Common myeloid progenitor, CD34-positive (primary cell): ENCODE measurements at regions of chr13 and their contacts with region 1.

Region 1: DNA sequence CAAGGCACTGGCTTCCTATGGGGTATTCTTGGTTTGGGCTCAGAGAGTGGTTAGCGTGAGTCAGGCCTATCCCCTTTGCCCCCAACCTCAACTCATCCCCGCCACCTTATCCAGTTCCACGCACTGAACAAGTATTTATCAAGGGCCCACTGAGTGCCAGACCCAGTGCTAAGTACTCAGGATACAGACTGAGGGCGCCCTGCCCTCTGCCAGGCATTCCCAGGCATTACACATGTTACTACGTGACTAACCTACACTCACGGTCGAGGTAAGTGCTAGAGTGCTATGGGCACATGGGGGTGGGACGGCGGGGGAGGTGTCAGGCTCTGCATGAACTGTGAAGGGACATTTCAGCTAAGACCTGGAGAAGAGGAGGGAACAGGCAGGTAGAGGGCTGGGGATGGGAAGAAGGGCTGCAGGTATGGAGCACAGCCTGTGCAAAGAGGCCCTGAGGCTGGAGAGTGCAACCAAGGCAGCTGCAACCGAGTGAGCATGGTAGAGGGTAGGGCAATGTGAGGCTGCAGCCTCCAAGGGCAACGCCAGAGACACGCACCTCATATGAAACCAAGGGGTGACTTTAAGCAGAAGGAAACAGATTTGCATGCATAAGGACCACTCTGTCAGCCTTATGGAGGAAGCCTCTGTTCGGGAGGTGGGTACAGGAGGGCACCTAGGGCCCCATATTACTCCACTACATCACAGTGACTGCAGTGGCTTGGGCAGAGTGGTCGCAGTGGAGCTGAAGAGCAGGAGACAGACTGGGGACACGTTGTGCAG is 22.5 kb downstream of the DHRS12 start:
- DNase-seq: peak in 2 of 3 donors; percentile 56 to 60
- H3K4me3 ChIP-seq: no peak overlapping the region
- H3K27ac ChIP-seq: no peak overlapping the region
- H3K4me1 ChIP-seq: peaks cover 3 to 25% (median 17%) of the 10 kb centered on the region in 4 experiments
- H3K27me3 ChIP-seq: no peaks in the 10 kb centered on the region

Region 2: DNA sequence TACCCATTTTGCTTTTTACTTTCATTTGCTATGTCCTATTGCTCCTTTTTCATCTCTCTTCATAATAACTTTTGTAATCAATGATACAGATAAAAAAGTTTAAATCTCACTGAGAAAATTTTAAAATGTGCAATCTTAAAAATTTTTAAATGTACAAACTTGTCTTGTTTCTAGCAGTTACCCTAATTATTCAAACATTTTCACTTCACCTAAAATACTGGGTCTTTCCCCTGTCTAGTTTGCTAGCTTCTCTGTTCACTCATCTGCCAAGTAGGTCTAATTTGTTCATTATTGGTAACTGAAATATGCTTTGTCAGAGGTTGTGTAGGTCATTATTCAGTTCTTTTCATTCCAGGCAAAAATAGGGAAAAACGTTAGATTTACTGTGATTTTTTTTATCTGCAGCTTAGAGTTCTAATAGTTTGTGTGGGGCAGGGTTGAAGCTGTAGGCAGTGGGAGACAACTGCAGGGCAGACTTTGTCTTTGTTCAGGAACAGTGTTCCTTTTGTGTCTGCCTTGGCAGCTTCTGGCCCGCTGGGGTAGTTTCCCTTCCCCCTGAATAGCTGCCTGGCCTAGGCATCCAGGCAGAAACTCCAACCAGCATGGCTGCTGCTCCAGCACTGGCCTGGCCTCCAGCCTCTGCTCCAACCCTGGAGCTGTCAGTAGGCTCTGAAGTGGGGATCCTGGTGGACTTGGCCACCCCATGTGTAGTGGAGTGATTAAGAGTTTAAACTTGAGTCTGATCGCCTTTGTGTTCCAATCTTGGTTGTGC is 148.7 kb before region 1 on chr13:
- CTCF ChIA-PET with region 1: no interaction called
- POLR2A ChIA-PET with region 1: no interaction called
- DNase-seq: no peak
- H3K4me3 ChIP-seq: no peak overlapping the region
- H3K27ac ChIP-seq: no peak overlapping the region
- H3K4me1 ChIP-seq: peaks cover 9 to 26% (median 11%) of the 10 kb centered on the region in 4 experiments
- H3K27me3 ChIP-seq: no peaks in the 10 kb centered on the region

Region 3: DNA sequence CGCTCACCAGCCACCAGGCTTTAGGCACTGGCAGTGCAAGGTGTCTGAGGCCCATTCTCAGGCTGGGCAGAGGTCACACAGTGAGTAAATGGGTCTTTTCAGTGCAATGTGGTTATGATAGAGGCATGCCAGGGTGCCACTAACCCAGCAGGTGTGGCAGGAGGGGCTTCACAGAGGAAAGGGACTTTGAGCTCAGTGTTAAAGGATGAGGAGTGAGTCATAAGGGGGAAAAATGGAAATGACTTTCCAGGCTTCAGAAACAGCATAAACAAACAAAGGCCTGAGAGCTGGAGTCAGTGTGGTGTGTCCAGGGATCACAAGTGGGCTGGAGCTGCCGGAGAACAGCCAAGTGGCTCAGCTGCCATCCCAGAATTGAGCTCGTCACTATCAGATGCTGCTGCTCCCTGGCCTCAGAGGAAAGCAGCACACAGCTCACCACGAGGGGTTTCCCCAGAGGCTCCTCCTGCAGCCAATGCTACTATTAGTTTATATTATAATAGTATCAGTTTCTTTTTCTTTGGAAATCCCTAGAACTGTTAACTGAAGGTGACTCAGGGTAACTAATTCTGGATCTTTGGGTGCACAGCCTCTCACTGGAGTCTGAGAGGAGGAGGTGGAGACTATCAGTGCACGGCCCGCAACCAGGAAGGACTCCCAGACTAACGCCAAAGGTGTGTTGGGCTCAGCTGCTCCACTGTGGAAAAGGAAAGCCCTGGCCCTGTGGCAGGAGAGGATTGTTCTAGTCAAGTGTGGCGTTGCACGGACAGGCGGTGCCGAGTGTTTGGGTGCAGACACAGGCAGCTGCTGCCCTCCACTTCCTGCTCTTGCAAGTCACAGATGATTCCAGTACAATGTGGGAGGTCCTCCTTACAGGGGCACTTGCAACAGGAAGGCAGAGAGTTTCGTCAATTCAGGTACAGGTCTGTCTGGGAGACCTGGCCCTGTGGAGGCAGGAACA is 17.0 kb before region 1 on chr13:
- CTCF ChIA-PET with region 1: interaction called, 11 read pairs
- POLR2A ChIA-PET with region 1: interaction called, 3 read pairs
- DNase-seq: peak; percentile 18 to 82 (median 81)
- H3K4me3 ChIP-seq: peak overlapping the region in 5 of 7 experiments; percentile 13 to 60 (median 46)
- H3K27ac ChIP-seq: peak overlapping the region; percentile 41 to 45
- H3K4me1 ChIP-seq: peaks cover 0 to 17% (median 15%) of the 10 kb centered on the region in 4 experiments
- H3K27me3 ChIP-seq: no peaks in the 10 kb centered on the region

Region 4: GRCh38 chr13:51895906-51896888 is 114.8 kb after region 1 on chr13:
- CTCF ChIA-PET with region 1: no interaction called
- POLR2A ChIA-PET with region 1: no interaction called
- DNase-seq: peak; percentile 72 to 84 (median 78)
- H3K4me3 ChIP-seq: peak overlapping the region in 1 of 7 experiments; percentile 35
- H3K27ac ChIP-seq: no peak overlapping the region
- H3K4me1 ChIP-seq: peaks cover 0 to 34% (median 3%) of the 10 kb centered on the region in 4 experiments
- H3K27me3 ChIP-seq: no peaks in the 10 kb centered on the region